ENCODE measurements at regions of chr11 and their contacts with region 1.

Region 1: DNA sequence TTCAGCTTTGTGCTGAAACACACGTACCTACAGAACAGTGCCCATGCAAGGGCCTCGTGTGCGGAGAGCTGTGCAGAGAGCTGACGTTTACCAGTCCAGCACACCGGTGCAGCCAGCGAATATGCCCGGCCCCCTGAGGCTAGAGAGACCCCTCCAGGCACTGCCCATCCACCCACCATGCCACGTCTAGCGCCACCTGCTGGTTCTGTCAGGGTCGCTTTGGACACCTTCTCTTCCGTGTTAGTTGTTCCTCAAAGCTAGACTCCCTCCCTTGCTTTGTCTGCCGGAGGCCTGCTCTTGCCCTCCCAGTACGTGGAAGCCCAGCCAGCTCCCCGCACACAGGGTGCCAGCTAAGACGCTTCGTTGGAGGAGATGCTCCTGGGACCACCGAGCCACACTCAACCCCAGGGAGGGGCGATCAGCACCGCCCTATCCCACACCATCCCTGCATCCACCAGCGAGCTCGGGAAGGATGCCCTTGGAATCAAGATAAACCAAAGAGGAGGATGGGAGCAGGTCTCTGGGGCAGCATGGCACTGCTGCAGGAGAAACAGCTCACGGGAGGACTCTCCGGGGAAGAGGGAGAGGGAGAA is 43.4 kb downstream of the CPT1A start:
- DNase-seq: peak; percentile 81
- ATAC-seq: peak; percentile 92
- H3K4me3 Mint-ChIP-seq: no peak overlapping the region
- H3K27ac Mint-ChIP-seq: no peak overlapping the region
- H3K4me1 Mint-ChIP-seq: peaks cover 6% of the 10 kb centered on the region; the same call in 1 of the 2 replicates
- H3K27me3 Mint-ChIP-seq: no peaks in the 10 kb centered on the region
- CTCF ChIP-seq: peak; percentile 89

Region 2: DNA sequence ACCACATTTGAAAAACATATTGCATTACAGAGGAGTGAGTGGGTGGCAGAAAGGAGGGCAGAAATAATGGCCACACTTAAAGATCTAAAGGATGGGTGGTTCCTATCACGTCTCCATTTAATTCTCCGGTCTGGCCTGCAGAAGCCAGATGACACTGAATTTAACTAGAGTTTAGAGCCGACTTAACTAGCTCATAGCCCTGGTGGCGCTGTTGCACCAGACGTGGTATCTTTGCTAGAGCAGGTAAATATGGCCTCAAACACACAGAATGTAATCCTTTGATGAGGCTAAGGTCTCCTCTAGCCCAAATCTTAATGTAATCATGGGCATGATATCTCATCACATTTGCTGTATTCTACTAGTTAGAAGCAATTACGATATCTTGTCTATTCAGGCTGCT is 165.5 kb before region 1 on chr11:
- CTCF ChIA-PET with region 1: interaction called, 20 read pairs
- POLR2A ChIA-PET with region 1: no interaction called
- DNase-seq: peak; percentile 80
- ATAC-seq: peak; percentile 100
- H3K4me3 Mint-ChIP-seq: no peak overlapping the region
- H3K27ac Mint-ChIP-seq: no peak overlapping the region
- H3K4me1 Mint-ChIP-seq: peaks cover 38% of the 10 kb centered on the region
- H3K27me3 Mint-ChIP-seq: no peaks in the 10 kb centered on the region
- CTCF ChIP-seq: peak; percentile 34; the same call in 1 of the 2 replicates

Region 3: DNA sequence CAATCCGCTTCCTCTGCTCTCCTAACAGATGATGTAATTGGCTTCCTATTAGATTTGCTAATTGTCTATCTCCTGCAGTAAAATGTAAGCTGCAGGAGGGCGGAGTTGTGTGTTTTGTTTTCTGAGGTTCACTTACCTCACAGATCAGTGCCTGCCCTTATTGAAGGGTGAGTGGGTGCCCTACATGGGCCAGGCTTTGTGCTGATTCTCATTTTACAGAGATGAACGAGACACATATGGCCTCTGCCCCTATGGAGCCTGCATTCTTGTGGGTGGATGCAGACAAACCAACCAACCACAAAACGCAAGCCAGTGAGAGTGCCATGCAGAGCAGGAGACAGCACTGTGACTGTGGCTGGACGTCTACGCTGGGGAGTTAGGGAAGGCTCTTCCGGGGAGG is 56.9 kb before region 1 on chr11:
- CTCF ChIA-PET with region 1: no interaction called
- POLR2A ChIA-PET with region 1: no interaction called
- DNase-seq: no peak
- ATAC-seq: peak; percentile 46
- H3K4me3 Mint-ChIP-seq: no peak overlapping the region
- H3K27ac Mint-ChIP-seq: peak overlapping the region; percentile 78
- H3K4me1 Mint-ChIP-seq: peaks cover 34% of the 10 kb centered on the region
- H3K27me3 Mint-ChIP-seq: no peaks in the 10 kb centered on the region
- CTCF ChIP-seq: no peak

Region 4: DNA sequence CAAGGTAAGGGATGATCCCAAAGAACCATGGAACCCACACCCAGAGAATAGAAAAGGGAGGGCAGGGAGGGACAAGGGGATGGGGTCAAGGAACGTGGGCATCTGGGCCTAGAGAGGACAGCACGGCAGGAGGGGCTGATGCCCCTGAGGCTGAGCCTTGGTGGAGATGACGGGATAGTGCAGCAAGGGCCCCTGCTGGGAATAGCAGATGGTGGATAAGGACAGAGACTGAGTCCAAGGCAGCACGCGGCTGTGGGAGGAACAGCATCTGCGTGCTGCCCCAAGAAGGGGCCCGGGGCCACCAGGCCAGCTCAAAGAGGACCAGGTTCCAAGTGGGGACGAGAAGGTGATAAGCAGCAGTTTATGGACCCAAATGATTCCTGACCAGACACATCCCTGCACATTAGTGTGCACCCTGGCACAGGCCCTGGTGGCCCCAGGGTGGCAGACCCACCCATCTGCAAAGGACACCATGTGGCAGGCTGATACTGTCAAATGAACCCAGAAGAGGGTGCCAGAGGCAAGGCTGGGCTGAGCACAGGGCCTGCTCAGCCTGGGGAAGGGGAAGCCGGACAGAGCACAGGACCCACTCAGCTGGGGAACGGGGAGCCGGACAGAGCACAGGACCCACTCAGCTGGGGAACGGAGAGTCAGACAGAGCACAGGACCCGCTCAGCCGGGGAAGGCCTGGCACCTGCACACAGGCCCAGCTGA is 34.2 kb before region 1 on chr11:
- CTCF ChIA-PET with region 1: interaction called, 13 read pairs
- POLR2A ChIA-PET with region 1: no interaction called
- DNase-seq: no peak
- ATAC-seq: peak; percentile 45
- H3K4me3 Mint-ChIP-seq: no peak overlapping the region
- H3K27ac Mint-ChIP-seq: peak overlapping the region; percentile 36; the same call in 1 of the 2 replicates
- H3K4me1 Mint-ChIP-seq: peaks cover 10% of the 10 kb centered on the region
- H3K27me3 Mint-ChIP-seq: no peaks in the 10 kb centered on the region
- CTCF ChIP-seq: no peak

Region 5: GRCh38 chr11:68816917-68817419 is 18.7 kb after region 1 on chr11:
- CTCF ChIA-PET with region 1: interaction called, 23 read pairs
- POLR2A ChIA-PET with region 1: no interaction called
- DNase-seq: no peak
- ATAC-seq: no peak
- H3K4me3 Mint-ChIP-seq: no peak overlapping the region
- H3K27ac Mint-ChIP-seq: peak overlapping the region; percentile 39; the same call in 1 of the 2 replicates
- H3K4me1 Mint-ChIP-seq: peaks cover 3% of the 10 kb centered on the region; the same call in 1 of the 2 replicates
- H3K27me3 Mint-ChIP-seq: no peaks in the 10 kb centered on the region
- CTCF ChIP-seq: no peak

Region 6: GRCh38 chr11:68869251-68869960 is 71.1 kb after region 1 on chr11:
- CTCF ChIA-PET with region 1: interaction called, 11 read pairs
- POLR2A ChIA-PET with region 1: no interaction called
- DNase-seq: no peak
- ATAC-seq: no peak
- H3K4me3 Mint-ChIP-seq: peak overlapping the region; percentile 16; the same call in 1 of the 2 replicates
- H3K27ac Mint-ChIP-seq: no peak overlapping the region
- H3K4me1 Mint-ChIP-seq: peaks cover 25% of the 10 kb centered on the region
- H3K27me3 Mint-ChIP-seq: no peaks in the 10 kb centered on the region
- CTCF ChIP-seq: no peak

Region 7: DNA sequence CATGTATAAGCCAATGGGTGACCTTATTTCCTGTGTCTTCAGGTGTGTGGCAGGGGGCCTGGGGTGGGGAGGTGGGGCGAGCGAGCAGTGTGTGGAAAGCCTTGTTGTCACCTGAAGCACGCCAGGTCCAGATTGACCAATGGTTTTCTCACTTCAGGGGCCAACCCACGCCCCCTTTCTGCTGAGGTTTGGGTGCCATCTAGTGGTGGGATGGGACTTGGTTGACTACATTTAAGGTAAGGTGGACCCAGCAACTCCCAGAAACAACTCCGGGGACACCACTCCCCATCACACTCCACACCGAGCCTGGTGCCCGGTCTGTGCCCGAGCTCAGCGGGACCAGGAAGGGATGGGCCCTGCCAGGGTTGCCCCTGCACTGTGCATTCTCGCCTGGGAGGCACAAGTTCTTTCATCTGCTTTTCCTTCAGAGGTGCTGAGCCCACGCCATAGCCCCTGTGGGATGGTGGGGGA is 290.4 kb after region 1 on chr11:
- CTCF ChIA-PET with region 1: no interaction called
- POLR2A ChIA-PET with region 1: no interaction called
- DNase-seq: peak; percentile 88
- ATAC-seq: peak; percentile 93
- H3K4me3 Mint-ChIP-seq: no peak overlapping the region
- H3K27ac Mint-ChIP-seq: peak overlapping the region; percentile 28; the same call in 1 of the 2 replicates
- H3K4me1 Mint-ChIP-seq: peaks cover 5% of the 10 kb centered on the region; the same call in 1 of the 2 replicates
- H3K27me3 Mint-ChIP-seq: no peaks in the 10 kb centered on the region
- CTCF ChIP-seq: peak; percentile 63

Region 8: GRCh38 chr11:69337211-69337721 is 538.9 kb after region 1 on chr11:
- CTCF ChIA-PET with region 1: no interaction called
- POLR2A ChIA-PET with region 1: no interaction called
- DNase-seq: no peak
- ATAC-seq: no peak
- H3K4me3 Mint-ChIP-seq: no peak overlapping the region
- H3K27ac Mint-ChIP-seq: no peak overlapping the region
- H3K4me1 Mint-ChIP-seq: peaks cover 12% of the 10 kb centered on the region
- H3K27me3 Mint-ChIP-seq: no peaks in the 10 kb centered on the region
- CTCF ChIP-seq: no peak

Measured in WTC11 (cell line).